PC-9 (cell line): ENCODE measurements at regions of chr13 and their contacts with region 1.

Region 1: GRCh38 chr13:44703371-44703770 is 127.2 kb upstream of the TSC22D1 start:
- DNase-seq: no peak
- H3K4me3 ChIP-seq: no peak overlapping the region
- H3K27ac ChIP-seq: no peak overlapping the region
- H3K4me1 ChIP-seq: 0 out of 2 replicates have a peak, but pooled peaks cover 7% of the 10 kb centered on the region
- H3K27me3 ChIP-seq: no peaks in the 10 kb centered on the region
- CTCF ChIP-seq: no peak

Region 2: GRCh38 chr13:44752164-44752563 is 48.8 kb after region 1 on chr13:
- CTCF ChIA-PET with region 1: interaction called, 10 read pairs
- POLR2A ChIA-PET with region 1: no interaction called
- intact Hi-C with region 1: no loop called
- DNase-seq: no peak
- H3K4me3 ChIP-seq: no peak overlapping the region
- H3K27ac ChIP-seq: no peak overlapping the region
- H3K4me1 ChIP-seq: peaks cover 37% of the 10 kb centered on the region
- H3K27me3 ChIP-seq: no peaks in the 10 kb centered on the region
- CTCF ChIP-seq: no peak

Region 3: GRCh38 chr13:44764302-44764692 is 60.9 kb after region 1 on chr13:
- CTCF ChIA-PET with region 1: no interaction called
- POLR2A ChIA-PET with region 1: no interaction called
- intact Hi-C with region 1: no loop called
- DNase-seq: no peak
- H3K4me3 ChIP-seq: no peak overlapping the region
- H3K27ac ChIP-seq: no peak overlapping the region
- H3K4me1 ChIP-seq: peaks cover 39% of the 10 kb centered on the region
- H3K27me3 ChIP-seq: no peaks in the 10 kb centered on the region
- CTCF ChIP-seq: no peak